ENCODE measurements at regions of chr2 and their contacts with region 1.

Region 1: DNA sequence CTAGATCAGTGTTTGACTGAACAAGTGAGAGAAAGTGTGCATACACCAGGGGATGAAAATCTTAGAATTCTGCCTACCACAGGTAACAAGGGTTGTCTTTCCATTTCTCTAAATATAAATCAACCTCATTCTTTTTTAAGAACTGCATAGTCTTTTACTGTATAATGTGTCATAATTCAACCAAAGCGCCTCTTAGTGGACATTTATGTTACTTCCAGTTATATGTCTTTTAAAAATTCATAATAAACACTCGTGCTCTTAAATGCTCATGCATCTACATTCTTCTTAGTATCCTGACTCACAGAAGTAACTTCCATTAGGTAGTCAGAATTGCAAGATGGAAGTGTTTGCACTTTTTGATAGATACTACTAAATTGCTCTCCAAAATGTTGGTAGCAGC is 76.2 kb downstream of the CHRNA1 start:
- DNase-seq: no peak
- ATAC-seq: peak; percentile 68
- H3K4me3 Mint-ChIP-seq: no peak overlapping the region
- H3K27ac Mint-ChIP-seq: no peak overlapping the region
- H3K4me1 Mint-ChIP-seq: peaks cover 44% of the 10 kb centered on the region
- H3K27me3 Mint-ChIP-seq: no peaks in the 10 kb centered on the region

Region 2: GRCh38 chr2:174593574-174594203 is 94.4 kb before region 1 on chr2:
- CTCF ChIA-PET with region 1: interaction called, 197 read pairs
- POLR2A ChIA-PET with region 1: interaction called, 33 read pairs
- DNase-seq: peak; percentile 89
- ATAC-seq: peak; percentile 73
- H3K4me3 Mint-ChIP-seq: peak overlapping the region; percentile 80
- H3K27ac Mint-ChIP-seq: peak overlapping the region; percentile 97
- H3K4me1 Mint-ChIP-seq: peaks cover 47% of the 10 kb centered on the region
- H3K27me3 Mint-ChIP-seq: no peaks in the 10 kb centered on the region

Region 3: DNA sequence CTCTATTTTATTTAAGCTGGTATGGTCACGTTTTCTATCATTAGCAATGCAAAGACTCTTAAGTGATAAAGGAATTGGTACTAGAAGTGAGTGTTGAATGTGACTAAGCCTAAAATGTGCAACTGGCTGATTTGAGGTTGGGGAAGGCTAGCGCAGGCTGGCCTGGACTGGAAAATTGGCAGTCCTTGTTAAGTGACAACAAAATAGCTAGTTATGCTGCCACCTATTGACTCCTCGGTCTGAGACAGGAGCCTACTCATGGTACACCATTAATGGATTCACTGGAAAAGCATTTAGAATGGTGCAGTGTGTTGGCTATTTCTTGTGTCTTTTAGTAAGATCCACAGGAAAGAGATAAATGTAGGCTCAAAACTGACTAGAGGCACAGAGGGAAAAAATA is 84.8 kb before region 1 on chr2:
- CTCF ChIA-PET with region 1: interaction called, 197 read pairs
- POLR2A ChIA-PET with region 1: interaction called, 5 read pairs
- DNase-seq: peak; percentile 68
- ATAC-seq: peak; percentile 54
- H3K4me3 Mint-ChIP-seq: no peak overlapping the region
- H3K27ac Mint-ChIP-seq: no peak overlapping the region
- H3K4me1 Mint-ChIP-seq: peaks cover 88% of the 10 kb centered on the region
- H3K27me3 Mint-ChIP-seq: no peaks in the 10 kb centered on the region

Region 4: GRCh38 chr2:174615871-174616436 is 72.1 kb before region 1 on chr2:
- CTCF ChIA-PET with region 1: interaction called, 197 read pairs
- POLR2A ChIA-PET with region 1: interaction called, 9 read pairs
- DNase-seq: no peak
- ATAC-seq: peak; percentile 45
- H3K4me3 Mint-ChIP-seq: peak overlapping the region; percentile 19
- H3K27ac Mint-ChIP-seq: peak overlapping the region; percentile 82
- H3K4me1 Mint-ChIP-seq: peaks cover 87% of the 10 kb centered on the region
- H3K27me3 Mint-ChIP-seq: no peaks in the 10 kb centered on the region

Region 5: GRCh38 chr2:174623690-174624089 is 64.4 kb before region 1 on chr2:
- CTCF ChIA-PET with region 1: interaction called, 44 read pairs
- POLR2A ChIA-PET with region 1: interaction called, 3 read pairs
- DNase-seq: no peak
- ATAC-seq: no peak
- H3K4me3 Mint-ChIP-seq: no peak overlapping the region
- H3K27ac Mint-ChIP-seq: peak overlapping the region; percentile 55
- H3K4me1 Mint-ChIP-seq: peaks cover 72% of the 10 kb centered on the region
- H3K27me3 Mint-ChIP-seq: no peaks in the 10 kb centered on the region

Region 6: DNA sequence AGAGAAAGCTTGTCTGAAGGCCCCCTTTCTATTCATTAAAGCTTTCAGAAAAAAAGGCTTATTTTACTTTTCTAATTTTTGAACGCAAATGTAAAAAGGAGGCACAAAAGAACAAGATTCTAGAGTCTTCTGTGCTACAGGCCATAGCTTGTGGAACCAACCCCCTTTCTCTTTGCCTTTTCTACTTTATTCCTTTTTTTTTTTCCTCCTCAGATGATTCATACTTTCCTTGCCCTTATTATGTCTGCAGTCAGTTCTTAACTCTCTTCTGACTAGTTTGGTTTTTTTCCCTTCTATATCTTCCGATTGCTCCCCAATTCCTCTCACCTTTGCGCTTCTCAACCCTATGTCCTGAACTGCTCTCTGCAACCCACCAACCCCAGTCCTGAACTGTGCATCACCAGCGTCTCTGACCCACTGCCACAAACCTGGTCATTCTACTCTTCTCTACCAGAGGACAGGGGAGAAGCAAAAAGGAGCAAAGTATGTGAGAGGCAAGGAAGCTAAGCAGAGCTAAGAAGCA is 33.6 kb before region 1 on chr2:
- CTCF ChIA-PET with region 1: interaction called, 10 read pairs
- POLR2A ChIA-PET with region 1: interaction called, 4 read pairs
- DNase-seq: no peak
- ATAC-seq: no peak
- H3K4me3 Mint-ChIP-seq: no peak overlapping the region
- H3K27ac Mint-ChIP-seq: no peak overlapping the region
- H3K4me1 Mint-ChIP-seq: peaks cover 29% of the 10 kb centered on the region
- H3K27me3 Mint-ChIP-seq: no peaks in the 10 kb centered on the region

Region 7: DNA sequence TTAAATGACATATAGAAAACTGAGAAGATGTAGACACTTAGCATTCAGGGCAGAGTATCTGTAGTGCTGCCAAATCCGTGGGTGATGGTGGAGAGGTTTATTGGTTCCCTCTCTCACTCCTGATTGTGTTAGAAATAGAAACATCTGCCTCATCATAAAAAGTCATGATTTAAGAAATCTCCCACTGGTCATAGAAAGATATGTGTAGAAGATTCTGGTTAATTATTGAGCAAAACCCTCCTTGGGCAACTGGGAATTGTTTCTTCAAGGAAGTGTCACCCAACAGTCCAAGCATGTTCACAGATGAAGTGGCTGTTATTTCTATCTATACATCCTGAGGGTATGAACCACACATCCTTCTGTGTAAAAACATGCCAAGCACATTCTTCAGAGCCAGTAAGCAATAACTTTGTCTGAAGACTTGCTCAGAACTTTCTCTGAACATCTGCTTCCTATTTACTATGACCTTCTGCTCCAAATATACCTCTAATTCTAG is 109.8 kb after region 1 on chr2:
- CTCF ChIA-PET with region 1: no interaction called
- POLR2A ChIA-PET with region 1: no interaction called
- DNase-seq: no peak
- ATAC-seq: no peak
- H3K4me3 Mint-ChIP-seq: no peak overlapping the region
- H3K27ac Mint-ChIP-seq: no peak overlapping the region
- H3K4me1 Mint-ChIP-seq: peaks cover 5% of the 10 kb centered on the region
- H3K27me3 Mint-ChIP-seq: peaks cover 4% of the 10 kb centered on the region

Region 8: DNA sequence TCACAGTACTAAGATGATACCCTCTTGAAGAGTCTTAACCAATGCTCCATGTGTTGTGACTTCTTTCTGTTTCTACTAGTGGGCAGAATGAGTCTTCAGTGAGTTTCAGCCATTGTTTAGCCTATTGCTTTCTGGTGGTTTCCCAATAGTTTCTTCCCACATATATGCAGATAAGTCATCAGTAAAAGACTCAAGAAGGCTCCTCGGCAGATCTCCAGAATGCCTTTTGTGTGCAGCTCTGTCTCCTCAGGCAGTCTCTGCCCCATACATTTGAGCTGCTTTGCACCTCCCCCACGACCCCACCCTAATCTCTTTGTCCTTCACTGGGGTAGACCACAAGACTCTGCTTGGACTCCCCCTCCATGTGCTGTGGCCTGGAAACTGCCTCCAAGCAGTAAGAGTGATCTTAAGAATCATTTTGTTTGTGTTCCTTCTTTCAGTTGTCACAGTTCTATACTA is 147.7 kb after region 1 on chr2:
- CTCF ChIA-PET with region 1: no interaction called
- POLR2A ChIA-PET with region 1: no interaction called
- DNase-seq: no peak
- ATAC-seq: peak; percentile 44
- H3K4me3 Mint-ChIP-seq: no peak overlapping the region
- H3K27ac Mint-ChIP-seq: no peak overlapping the region
- H3K4me1 Mint-ChIP-seq: peaks cover 22% of the 10 kb centered on the region
- H3K27me3 Mint-ChIP-seq: no peaks in the 10 kb centered on the region

Measured in activated CD8-positive, alpha-beta T cell treated with anti-CD3 and anti-CD28 coated beads, Interleukin-2, amount 10 ng/mL, durations not matched to agents 7 days and 5 days (primary cell).